IMR-90 (cell line): ENCODE measurements at regions of chrX and their contacts with region 1.

Region 1: GRCh38 chrX:30635630-30636029 is 17.6 kb upstream of the GK start:
- DNase-seq: peak; percentile 32
- ATAC-seq: peak; percentile 40
- H3K4me3 ChIP-seq: no peak overlapping the region
- H3K27ac ChIP-seq: no peak overlapping the region
- H3K4me1 ChIP-seq: no peaks in the 10 kb centered on the region
- H3K27me3 ChIP-seq: no peaks in the 10 kb centered on the region
- CTCF ChIP-seq: peak; percentile 56
- POLR2A ChIP-seq: no peak
- RAD21 ChIP-seq: peak; percentile 70

Region 2: DNA sequence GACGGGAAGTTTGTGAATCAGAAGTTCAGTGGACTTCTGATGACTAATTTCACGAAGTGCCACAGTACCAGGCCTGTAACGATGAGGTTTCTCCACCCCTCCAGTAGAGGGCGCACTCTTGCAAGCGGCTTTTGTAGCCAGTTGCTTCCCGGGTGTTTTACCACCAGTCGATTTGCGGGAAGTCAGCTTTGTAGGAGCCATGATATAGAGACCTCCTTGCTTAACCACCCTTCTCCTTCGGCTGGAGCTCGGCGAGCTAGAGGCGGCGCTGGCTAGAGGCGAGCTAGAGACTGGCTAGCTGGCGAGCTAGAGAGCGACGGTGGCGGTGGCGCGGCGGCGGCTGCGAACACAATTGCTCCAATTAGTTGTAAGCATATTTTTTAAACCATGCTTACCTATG is 1976.4 kb before region 1 on chrX:
- CTCF ChIA-PET with region 1: no interaction called
- POLR2A ChIA-PET with region 1: no interaction called
- dilution Hi-C with region 1: no loop called
- in situ Hi-C with region 1: no loop called
- intact Hi-C with region 1: no loop called
- DNase-seq: no peak
- ATAC-seq: no peak
- H3K4me3 ChIP-seq: no peak overlapping the region
- H3K27ac ChIP-seq: no peak overlapping the region
- H3K4me1 ChIP-seq: no peaks in the 10 kb centered on the region
- H3K27me3 ChIP-seq: no peaks in the 10 kb centered on the region
- CTCF ChIP-seq: no peak
- POLR2A ChIP-seq: no peak
- RAD21 ChIP-seq: no peak

Region 3: DNA sequence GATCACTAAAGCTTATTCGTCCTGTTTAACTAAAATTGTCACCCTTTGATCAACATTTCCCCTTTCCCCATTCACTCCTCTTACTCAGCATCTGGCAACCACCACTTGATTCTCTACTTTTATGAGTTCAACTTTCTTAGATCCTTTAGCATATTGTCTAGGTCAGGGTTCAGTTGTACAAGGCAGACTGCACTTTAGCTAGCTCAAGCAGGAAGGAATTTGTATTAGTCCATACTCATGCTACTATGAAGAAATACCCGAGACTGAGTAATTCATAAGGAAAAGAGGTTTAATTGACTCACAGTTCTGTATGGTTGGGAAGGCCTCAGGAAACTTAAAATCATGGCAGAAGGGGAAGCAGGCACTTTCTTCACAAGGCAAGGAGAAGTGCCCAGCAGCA is 102.4 kb before region 1 on chrX:
- CTCF ChIA-PET with region 1: no interaction called
- POLR2A ChIA-PET with region 1: no interaction called
- dilution Hi-C with region 1: no loop called
- in situ Hi-C with region 1: no loop called
- intact Hi-C with region 1: no loop called
- DNase-seq: peak; percentile 32
- ATAC-seq: peak; percentile 35; the same call in 1 of the 2 replicates
- H3K4me3 ChIP-seq: no peak overlapping the region
- H3K27ac ChIP-seq: no peak overlapping the region
- H3K4me1 ChIP-seq: no peaks in the 10 kb centered on the region
- H3K27me3 ChIP-seq: no peaks in the 10 kb centered on the region
- CTCF ChIP-seq: no peak
- POLR2A ChIP-seq: no peak
- RAD21 ChIP-seq: no peak

Region 4: GRCh38 chrX:30620980-30621618 is 14.5 kb before region 1 on chrX:
- CTCF ChIA-PET with region 1: no interaction called
- POLR2A ChIA-PET with region 1: interaction called, 15 read pairs
- dilution Hi-C with region 1: no loop called
- in situ Hi-C with region 1: no loop called
- intact Hi-C with region 1: no loop called
- DNase-seq: peak; percentile 93
- ATAC-seq: peak; percentile 88
- H3K4me3 ChIP-seq: no peak overlapping the region
- H3K27ac ChIP-seq: no peak overlapping the region
- H3K4me1 ChIP-seq: peaks cover 2% of the 10 kb centered on the region; the same call in 1 of the 2 replicates
- H3K27me3 ChIP-seq: no peaks in the 10 kb centered on the region
- CTCF ChIP-seq: no peak
- POLR2A ChIP-seq: no peak
- RAD21 ChIP-seq: no peak

Region 5: GRCh38 chrX:30713061-30713525 is 77.5 kb after region 1 on chrX:
- CTCF ChIA-PET with region 1: no interaction called
- POLR2A ChIA-PET with region 1: no interaction called
- dilution Hi-C with region 1: no loop called
- in situ Hi-C with region 1: no loop called
- intact Hi-C with region 1: loop called (anchors 1 kb)
- DNase-seq: peak; percentile 65
- ATAC-seq: peak; percentile 44; the same call in 1 of the 2 replicates
- H3K4me3 ChIP-seq: no peak overlapping the region
- H3K27ac ChIP-seq: no peak overlapping the region
- H3K4me1 ChIP-seq: no peaks in the 10 kb centered on the region
- H3K27me3 ChIP-seq: no peaks in the 10 kb centered on the region
- CTCF ChIP-seq: peak; percentile 68
- POLR2A ChIP-seq: no peak
- RAD21 ChIP-seq: peak; percentile 81

Region 6: GRCh38 chrX:30779453-30780030 is 143.9 kb after region 1 on chrX:
- CTCF ChIA-PET with region 1: no interaction called
- POLR2A ChIA-PET with region 1: no interaction called
- dilution Hi-C with region 1: no loop called
- in situ Hi-C with region 1: no loop called
- intact Hi-C with region 1: no loop called
- DNase-seq: no peak
- ATAC-seq: no peak
- H3K4me3 ChIP-seq: no peak overlapping the region
- H3K27ac ChIP-seq: no peak overlapping the region
- H3K4me1 ChIP-seq: no peaks in the 10 kb centered on the region
- H3K27me3 ChIP-seq: no peaks in the 10 kb centered on the region
- CTCF ChIP-seq: no peak
- POLR2A ChIP-seq: no peak
- RAD21 ChIP-seq: no peak